Posterior vena cava (tissue), 2 donors: ENCODE measurements at regions of chr15 and their contacts with region 1.

Region 1: DNA sequence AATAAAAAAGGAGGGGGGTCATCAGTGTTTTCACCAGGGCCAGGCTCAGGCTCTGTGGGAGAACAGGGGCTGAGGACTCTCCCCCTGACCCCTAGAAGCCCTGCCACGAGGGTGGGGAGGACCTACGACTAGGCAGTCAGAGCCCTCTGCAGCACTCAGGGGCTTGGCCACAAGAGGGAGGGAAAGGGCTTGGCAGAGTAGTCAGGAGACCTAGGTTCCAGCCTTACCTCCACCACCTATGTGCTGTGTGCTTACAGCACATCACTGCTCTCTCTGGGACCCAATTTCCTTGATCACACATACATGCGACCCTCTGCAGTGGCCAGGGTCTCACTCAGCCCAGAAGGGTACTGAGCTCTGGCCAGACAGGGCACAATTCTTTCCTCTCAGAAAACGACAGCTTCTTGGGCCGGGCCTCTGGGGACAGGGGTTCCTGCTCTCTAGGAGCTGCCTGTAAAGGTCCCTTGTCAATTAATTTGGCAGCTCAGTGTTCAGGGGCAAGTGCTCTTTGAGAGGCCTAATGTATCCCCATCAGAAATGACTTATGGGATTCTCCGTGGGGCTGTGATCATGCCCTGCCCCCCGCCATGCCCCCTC is 16.4 kb upstream of the SKIC8 start:
- DNase-seq: peak; percentile 31

Region 2: GRCh38 chr15:76863693-76864092 is 1452.1 kb before region 1 on chr15:
- intact Hi-C with region 1: loop called in 1 of 2 experiments (anchors 5 kb)
- DNase-seq: no peak